Activated naive CD8-positive, alpha-beta T cell treated with anti-CD3 and anti-CD28 coated beads, Interleukin-2, amount 10 ng/mL, durations not matched to agents 7 days and 5 days (primary cell): ENCODE measurements at regions of chr16 and their contacts with region 1.

Region 1: DNA sequence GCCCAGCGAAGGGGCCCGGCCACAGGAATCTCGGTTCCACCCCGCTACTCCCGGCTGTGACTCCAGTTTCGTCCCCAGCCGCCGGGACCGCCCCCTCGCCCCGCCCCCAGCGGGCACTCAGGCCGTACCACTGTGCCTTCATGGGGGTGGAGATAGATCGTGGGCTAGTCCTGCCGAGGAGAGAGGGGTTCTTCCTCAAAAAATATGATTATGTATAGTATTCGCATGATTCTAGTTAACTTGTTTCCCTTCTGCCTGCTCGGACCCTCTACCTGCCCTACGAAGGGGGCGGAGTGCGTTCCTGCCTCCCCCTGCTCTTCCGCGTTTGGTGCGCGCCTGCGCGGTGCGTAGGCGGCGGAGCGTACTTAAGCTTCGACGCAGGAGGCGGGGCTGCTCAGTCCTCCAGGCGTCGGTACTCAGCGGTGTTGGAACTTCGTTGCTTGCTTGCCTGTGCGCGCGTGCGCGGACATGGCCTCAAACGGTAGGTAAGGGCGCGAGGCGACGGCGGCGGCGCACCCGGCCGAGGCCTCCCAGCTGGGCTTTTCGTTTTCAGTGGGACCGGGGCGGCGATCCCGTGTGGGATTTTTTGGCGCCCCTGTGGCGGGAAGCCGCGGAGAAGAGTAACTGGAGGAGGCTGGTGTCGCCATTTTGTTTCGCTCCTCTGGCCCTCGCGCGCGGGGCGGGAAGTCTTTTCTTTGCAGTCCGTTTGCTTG is at the start of gene FUS:
- DNase-seq: peak; percentile 96
- ATAC-seq: peak; percentile 60
- H3K4me3 Mint-ChIP-seq: peak within 1 kb of the TSS; percentile 99
- H3K27ac Mint-ChIP-seq: peak within 1 kb of the TSS; percentile 97
- H3K4me1 Mint-ChIP-seq: peaks cover 44% of the 10 kb centered on the region
- H3K27me3 Mint-ChIP-seq: no peaks in the 10 kb centered on the region
- total RNA-seq, gene FUS: 540 to 618 TPM

Region 2: GRCh38 chr16:31073968-31074813 is 105.7 kb before region 1 on chr16 and contains the starts of genes ZNF646 and ZNF668:
- POLR2A ChIA-PET with region 1: interaction called, 22 read pairs
- DNase-seq: peak; percentile 94
- ATAC-seq: peak; percentile 78
- H3K4me3 Mint-ChIP-seq: peak within 1 kb of the TSS; percentile 97
- H3K27ac Mint-ChIP-seq: peak within 1 kb of the TSS; percentile 99
- H3K4me1 Mint-ChIP-seq: peaks cover 28% of the 10 kb centered on the region
- H3K27me3 Mint-ChIP-seq: no peaks in the 10 kb centered on the region
- total RNA-seq, gene ZNF646: 37.3 to 38.7 TPM
- total RNA-seq, gene ZNF668: 17.9 to 20.5 TPM

Region 3: GRCh38 chr16:31128711-31129567 is 51.0 kb before region 1 on chr16:
- POLR2A ChIA-PET with region 1: no interaction called
- DNase-seq: no peak
- ATAC-seq: peak; percentile 25
- H3K4me3 Mint-ChIP-seq: no peak overlapping the region
- H3K27ac Mint-ChIP-seq: peak overlapping the region; percentile 70
- H3K4me1 Mint-ChIP-seq: peaks cover 5% of the 10 kb centered on the region
- H3K27me3 Mint-ChIP-seq: no peaks in the 10 kb centered on the region

Region 4: DNA sequence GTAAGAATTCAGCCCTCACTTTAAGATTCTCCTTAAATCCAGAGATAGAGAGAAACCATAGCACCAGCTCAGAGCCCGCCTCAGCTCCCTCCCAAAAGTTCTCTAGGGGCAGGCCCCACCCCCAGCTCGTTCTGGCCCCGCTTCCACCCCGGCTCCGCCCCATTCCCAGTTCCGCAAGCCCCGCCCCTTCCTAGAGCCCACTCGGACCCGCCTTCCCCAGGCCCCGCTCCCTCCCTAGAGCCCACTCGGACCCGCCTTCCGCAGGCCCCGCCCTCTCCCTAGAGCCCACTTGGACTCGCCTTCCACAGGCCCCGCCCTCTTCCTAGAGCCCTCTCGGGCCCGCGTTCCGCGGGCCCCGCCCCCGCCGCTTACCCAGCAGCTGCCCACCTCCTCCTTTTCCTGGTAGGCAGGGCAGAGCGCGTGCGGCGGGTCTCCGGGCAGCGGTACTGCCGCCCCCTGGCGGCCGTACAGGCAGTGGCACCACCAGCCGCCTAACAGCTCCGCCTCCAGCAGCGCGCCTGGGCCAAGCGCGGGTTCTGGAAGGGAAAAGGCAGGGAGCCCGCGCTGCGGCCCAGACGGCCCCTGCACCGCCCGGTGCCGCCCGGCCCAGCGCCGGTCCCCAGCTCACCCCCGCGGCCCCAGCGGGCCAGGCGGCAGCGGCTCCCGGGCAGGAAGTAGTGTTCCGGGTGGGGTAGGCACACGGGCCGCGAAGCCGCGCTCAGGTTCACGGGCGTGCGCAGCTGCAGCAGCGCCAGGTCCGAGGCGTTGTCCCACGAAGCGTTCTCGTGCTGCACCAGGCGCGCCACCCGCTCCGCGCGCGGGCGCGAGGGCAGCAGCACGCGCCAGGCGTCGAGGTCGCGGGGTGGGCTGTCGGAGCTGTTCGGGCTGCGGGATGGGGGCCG is 37.5 kb before region 1 on chr16:
- POLR2A ChIA-PET with region 1: interaction called, 138 read pairs
- DNase-seq: peak; percentile 98
- ATAC-seq: peak; percentile 87
- H3K4me3 Mint-ChIP-seq: peak overlapping the region; percentile 86
- H3K27ac Mint-ChIP-seq: peak overlapping the region; percentile 89
- H3K4me1 Mint-ChIP-seq: peaks cover 5% of the 10 kb centered on the region
- H3K27me3 Mint-ChIP-seq: peaks cover 1% of the 10 kb centered on the region

Region 5: GRCh38 chr16:31168848-31169247 is 11.1 kb before region 1 on chr16:
- POLR2A ChIA-PET with region 1: interaction called, 10 read pairs
- DNase-seq: no peak
- ATAC-seq: no peak
- H3K4me3 Mint-ChIP-seq: no peak overlapping the region
- H3K27ac Mint-ChIP-seq: no peak overlapping the region
- H3K4me1 Mint-ChIP-seq: peaks cover 3% of the 10 kb centered on the region
- H3K27me3 Mint-ChIP-seq: no peaks in the 10 kb centered on the region

Region 6: GRCh38 chr16:31202414-31203375 is 22.8 kb after region 1 on chr16 and contains the start of gene PYCARD:
- POLR2A ChIA-PET with region 1: interaction called, 57 read pairs
- DNase-seq: peak; percentile 71
- ATAC-seq: peak; percentile 25
- H3K4me3 Mint-ChIP-seq: peak within 1 kb of the TSS; percentile 90
- H3K27ac Mint-ChIP-seq: peak within 1 kb of the TSS; percentile 86
- H3K4me1 Mint-ChIP-seq: peaks cover 50% of the 10 kb centered on the region
- H3K27me3 Mint-ChIP-seq: peaks cover 12% of the 10 kb centered on the region
- total RNA-seq, gene PYCARD: 82.3 to 87.0 TPM

Region 7: GRCh38 chr16:31305219-31305618 is 125.3 kb after region 1 on chr16:
- POLR2A ChIA-PET with region 1: no interaction called
- DNase-seq: no peak
- ATAC-seq: no peak
- H3K4me3 Mint-ChIP-seq: no peak overlapping the region
- H3K27ac Mint-ChIP-seq: no peak overlapping the region
- H3K4me1 Mint-ChIP-seq: peaks cover 3% of the 10 kb centered on the region
- H3K27me3 Mint-ChIP-seq: peaks cover 44% of the 10 kb centered on the region

Region 8: DNA sequence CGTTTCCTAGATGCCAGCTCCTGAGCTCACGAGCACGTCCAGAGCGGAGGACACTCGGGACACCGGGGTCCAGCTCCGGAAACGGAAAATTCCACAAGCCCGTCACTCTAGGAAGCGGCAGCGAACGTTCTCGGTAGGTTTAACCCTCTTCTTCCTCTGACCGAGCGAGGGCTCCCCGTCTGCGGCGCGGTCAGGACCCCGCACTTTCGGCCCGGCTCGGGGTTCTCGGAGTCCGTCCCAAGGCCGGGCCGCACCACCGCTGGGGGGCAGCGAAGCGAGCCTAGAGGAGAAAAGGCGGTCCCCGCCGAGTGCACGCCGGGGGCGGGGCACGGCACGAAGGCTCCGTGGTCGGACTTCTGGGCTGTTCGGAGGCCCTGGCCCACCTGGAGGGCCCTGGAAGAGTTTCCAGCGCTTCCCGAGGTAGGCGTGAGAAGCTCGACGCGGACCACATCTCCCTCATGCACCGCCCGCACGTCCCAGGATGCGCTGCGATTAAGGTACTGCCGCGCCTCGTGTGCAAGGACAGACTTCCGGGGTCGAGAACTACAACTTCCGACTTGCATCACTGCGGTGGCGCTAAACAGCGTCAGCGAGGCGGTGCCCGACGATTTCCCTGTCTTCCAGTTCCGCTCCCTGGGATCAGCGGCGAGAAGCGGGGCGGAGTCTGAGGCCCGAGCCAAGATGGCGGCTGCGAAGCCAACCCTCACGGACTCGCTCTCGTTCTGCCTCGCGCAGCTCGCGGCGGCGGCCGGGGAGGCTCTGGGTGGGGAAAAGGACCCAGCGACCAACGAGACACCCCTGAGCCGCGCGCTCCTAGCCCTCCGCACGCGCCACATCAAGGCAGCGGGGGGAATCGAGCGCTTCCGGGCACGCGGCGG is 279.2 kb after region 1 on chr16 and contains the start of gene ARMC5:
- POLR2A ChIA-PET with region 1: interaction called, 28 read pairs
- DNase-seq: peak; percentile 95
- ATAC-seq: peak; percentile 66
- H3K4me3 Mint-ChIP-seq: peak within 1 kb of the TSS; percentile 92
- H3K27ac Mint-ChIP-seq: peak within 1 kb of the TSS; percentile 97
- H3K4me1 Mint-ChIP-seq: peaks cover 38% of the 10 kb centered on the region
- H3K27me3 Mint-ChIP-seq: no peaks in the 10 kb centered on the region
- total RNA-seq, gene ARMC5: 12.9 to 13.6 TPM